Dorsolateral prefrontal cortex (tissue), 120 donors: ENCODE measurements at regions of chr5 and their contacts with region 1.

Region 1: DNA sequence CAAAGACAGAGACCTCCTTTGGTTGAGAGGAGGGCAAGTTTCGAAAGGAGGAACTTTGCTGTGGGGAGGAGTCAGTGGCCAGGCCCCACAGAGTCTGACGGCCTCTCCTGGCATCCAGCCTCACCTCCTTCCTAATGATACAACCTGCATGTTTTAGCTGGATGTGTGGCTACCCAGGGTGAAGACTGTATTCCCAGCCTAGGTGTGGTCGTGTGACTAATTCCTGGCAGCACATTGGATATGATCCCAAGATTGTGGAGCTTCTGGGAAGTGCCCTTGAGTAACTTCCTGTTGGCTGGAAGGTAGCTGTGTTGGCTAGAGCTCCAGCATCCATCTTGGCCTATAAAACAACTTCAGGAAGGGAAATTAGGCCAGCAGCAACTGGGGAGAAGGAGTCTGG is 19.0 kb upstream of the LPCAT1 start:
- DNase-seq: peak in 3 of 10 donors; percentile 9 to 23 (median 20)
- H3K4me3 ChIP-seq: no peak overlapping the region
- H3K27ac ChIP-seq: no peak overlapping the region
- H3K27me3 ChIP-seq: peaks cover 0 to 7% (median 0%) of the 10 kb centered on the region in 45 donors
- CTCF ChIP-seq: no peak

Region 2: GRCh38 chr5:1048861-1049838 is 493.6 kb before region 1 on chr5:
- intact Hi-C with region 1: loop called in 1 of 2 experiments (anchors 10 kb)
- DNase-seq: peak in 2 of 10 donors; percentile 16 to 37
- H3K4me3 ChIP-seq: no peak overlapping the region
- H3K27ac ChIP-seq: no peak overlapping the region
- H3K27me3 ChIP-seq: peaks cover 0 to 3% (median 0%) of the 10 kb centered on the region in 45 donors
- CTCF ChIP-seq: no peak